ENCODE measurements at regions of chr9 and their contacts with region 1.

Region 1: GRCh38 chr9:81410197-81410596 is 279.1 kb downstream of the TLE1 start:
- DNase-seq: no peak
- H3K4me3 ChIP-seq: no peak overlapping the region
- H3K27ac ChIP-seq: no peak overlapping the region
- H3K4me1 ChIP-seq: no peaks in the 10 kb centered on the region
- H3K27me3 ChIP-seq: no peaks in the 10 kb centered on the region
- CTCF ChIP-seq: no peak
- EP300 ChIP-seq: no peak
- POLR2A ChIP-seq: no peak

Region 2: DNA sequence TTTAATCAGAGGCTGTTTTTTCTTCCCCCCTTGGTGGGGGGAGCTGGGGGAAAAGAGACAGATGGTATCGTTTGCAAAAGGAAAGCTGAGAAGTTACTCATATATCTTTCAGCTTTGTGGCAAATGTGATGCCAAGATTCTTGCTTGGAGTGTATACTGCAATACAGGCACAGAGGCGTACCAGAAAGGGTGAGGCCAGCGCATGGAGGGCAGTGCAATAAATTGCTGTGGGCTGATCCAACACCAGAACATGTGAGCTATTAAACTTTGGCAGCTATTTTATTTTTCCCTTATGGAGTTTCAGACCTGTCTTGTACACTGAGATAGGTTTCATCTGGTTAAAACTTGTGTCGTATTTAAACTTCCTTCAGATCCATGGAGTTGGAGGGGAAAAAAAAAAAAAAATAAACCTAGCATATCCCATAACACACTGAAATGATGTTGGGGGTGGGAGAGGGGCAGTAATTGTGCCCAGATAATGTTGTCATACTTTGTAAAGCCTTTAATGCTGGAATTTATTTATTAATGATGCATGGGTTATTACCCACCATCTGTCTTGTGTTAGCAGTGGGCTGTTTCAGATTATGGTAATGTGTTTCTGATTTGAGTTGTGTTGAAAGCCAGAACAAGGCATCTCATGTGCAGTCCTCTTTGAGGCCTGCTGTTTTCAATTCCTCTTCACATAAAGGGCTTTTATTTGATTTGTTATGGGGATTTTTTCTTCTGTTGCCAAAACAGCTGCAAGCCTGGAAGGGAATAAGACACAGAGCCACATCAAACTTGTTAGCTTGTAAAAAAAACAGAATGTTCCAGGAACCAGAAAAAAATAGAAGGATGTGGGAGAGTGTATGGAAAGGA is 612.1 kb before region 1 on chr9:
- in situ Hi-C with region 1: no loop called
- intact Hi-C with region 1: loop called (anchors 5 kb)
- DNase-seq: peak; percentile 15
- H3K4me3 ChIP-seq: no peak overlapping the region
- H3K27ac ChIP-seq: peak overlapping the region; percentile 40 to 82 (median 75)
- H3K4me1 ChIP-seq: peaks cover 0 to 20% (median 6%) of the 10 kb centered on the region in 4 donors
- H3K27me3 ChIP-seq: no peaks in the 10 kb centered on the region
- CTCF ChIP-seq: no peak
- EP300 ChIP-seq: peak; percentile 31
- POLR2A ChIP-seq: no peak

Region 3: DNA sequence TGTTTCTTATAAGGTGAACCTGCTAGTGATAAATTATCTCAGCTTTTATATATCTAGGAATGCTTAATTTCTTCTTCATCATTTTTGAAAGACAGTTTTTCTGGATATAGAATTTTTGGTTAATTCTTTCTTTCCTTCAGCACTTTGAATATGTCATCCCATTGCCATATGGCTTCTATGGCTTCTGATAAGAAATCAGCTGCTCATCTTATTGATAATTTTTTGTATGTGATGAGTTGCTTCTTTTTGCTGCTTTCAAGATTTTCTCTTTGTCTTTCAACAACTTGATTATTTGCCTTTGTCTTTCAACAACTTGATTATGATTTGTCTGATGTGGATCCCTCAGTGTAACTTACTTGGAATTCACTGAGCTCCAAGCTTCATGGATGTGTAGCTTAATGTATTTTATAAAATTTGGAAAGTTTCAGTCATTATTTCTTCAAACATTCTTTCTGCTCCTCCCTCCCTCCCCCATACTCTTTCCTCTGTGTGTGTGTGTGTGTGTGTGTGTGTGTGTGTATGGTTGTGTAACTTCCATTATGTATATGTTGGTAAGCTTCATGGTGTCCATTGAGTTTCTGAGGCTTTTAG is 35.2 kb after region 1 on chr9:
- in situ Hi-C with region 1: no loop called
- intact Hi-C with region 1: no loop called
- DNase-seq: no peak
- H3K4me3 ChIP-seq: no peak overlapping the region
- H3K27ac ChIP-seq: no peak overlapping the region
- H3K4me1 ChIP-seq: no peaks in the 10 kb centered on the region
- H3K27me3 ChIP-seq: no peaks in the 10 kb centered on the region
- CTCF ChIP-seq: no peak
- EP300 ChIP-seq: no peak
- POLR2A ChIP-seq: no peak